PC-9 (cell line): ENCODE measurements at regions of chr17 and their contacts with region 1.

Region 1: GRCh38 chr17:1989135-1989534 is 36.0 kb downstream of the RTN4RL1 start:
- DNase-seq: peak; percentile 41 to 87
- H3K4me3 ChIP-seq: no peak overlapping the region
- H3K27ac ChIP-seq: peak overlapping the region; percentile 20; the same call in 1 of the 2 replicates
- H3K4me1 ChIP-seq: peaks cover 20% of the 10 kb centered on the region
- H3K27me3 ChIP-seq: no peaks in the 10 kb centered on the region
- CTCF ChIP-seq: no peak

Region 2: DNA sequence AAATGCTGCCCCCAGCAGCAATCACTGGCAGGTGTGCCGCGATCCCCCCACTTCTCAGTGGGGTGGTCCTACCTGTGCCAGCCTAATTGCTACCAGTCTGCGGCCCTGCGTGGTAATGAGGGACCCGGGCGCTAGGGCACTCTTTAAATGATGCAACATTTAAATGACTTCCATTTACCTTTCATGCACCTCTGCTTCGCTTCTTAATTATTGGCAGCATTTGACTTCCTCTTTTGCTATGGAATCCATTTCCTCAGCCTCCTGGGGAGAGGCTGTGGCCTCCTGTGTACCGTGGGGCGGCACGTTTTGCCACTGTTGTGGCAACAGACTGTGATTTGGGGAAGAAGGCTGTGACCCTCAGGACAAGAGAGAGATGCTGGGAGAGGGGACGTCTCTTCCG is 73.2 kb before region 1 on chr17:
- CTCF ChIA-PET with region 1: no interaction called
- POLR2A ChIA-PET with region 1: interaction called, 22 read pairs
- intact Hi-C with region 1: no loop called
- DNase-seq: no peak
- H3K4me3 ChIP-seq: no peak overlapping the region
- H3K27ac ChIP-seq: no peak overlapping the region
- H3K4me1 ChIP-seq: no peaks in the 10 kb centered on the region
- H3K27me3 ChIP-seq: no peaks in the 10 kb centered on the region; the same call in 1 of the 2 replicates
- CTCF ChIP-seq: no peak

Region 3: DNA sequence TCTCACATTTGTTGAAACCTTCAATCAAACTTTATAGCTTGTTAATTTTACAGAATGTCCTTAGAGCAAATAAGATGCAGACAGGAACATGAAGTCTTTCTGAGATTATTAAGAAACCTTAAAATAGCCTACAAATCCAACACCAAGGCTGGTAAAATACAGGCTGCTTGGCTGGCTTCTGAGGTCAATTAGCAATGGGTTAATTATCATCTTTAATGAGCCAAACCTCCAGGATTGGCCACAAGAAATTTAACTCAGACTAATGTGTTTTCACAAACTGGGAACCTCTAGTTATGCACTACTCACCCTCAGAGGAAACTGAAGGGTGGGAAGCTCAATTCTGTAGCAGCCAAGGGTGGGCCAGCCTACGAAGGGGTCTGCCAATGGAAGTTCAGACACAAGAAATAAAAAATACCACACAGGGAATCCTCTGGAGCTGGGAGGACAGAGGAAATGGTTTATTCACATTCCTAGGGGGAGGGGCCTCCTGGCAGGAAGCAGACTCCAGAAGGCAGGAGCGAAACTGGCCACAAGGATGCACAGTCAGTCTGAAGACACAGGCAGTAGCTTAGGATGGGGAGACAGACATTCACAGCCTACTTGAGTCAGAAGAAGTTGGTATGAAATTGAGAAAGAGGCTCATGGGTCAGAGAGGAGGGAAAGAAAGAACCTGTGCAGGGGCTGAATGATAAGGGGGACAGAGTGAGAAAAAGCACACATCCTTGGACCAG is 101.8 kb after region 1 on chr17:
- CTCF ChIA-PET with region 1: no interaction called
- POLR2A ChIA-PET with region 1: no interaction called
- intact Hi-C with region 1: no loop called
- DNase-seq: peak; percentile 34
- H3K4me3 ChIP-seq: no peak overlapping the region
- H3K27ac ChIP-seq: no peak overlapping the region
- H3K4me1 ChIP-seq: peaks cover 17% of the 10 kb centered on the region
- H3K27me3 ChIP-seq: no peaks in the 10 kb centered on the region
- CTCF ChIP-seq: no peak